ENCODE measurements at regions of chr12 and their contacts with region 1.

Region 1: DNA sequence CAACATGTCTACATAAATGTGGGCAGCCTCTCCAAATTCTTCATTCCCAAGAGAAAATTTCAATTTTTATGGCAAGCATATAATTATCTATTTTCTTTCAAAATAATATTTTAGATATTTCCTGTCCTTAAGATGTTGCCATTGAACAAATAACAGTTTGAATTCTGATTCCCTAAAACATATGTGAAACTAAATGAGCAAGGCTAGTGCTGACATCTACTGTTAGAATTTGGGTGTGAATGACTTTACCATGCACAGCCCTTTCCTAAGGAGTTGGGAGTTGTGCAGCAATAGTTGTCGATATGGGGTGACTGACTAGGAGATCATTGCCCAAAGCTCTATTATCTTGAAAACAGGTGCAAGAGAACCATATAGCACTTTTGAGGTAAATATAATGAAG is 108.2 kb upstream of the SLC38A4 start:
- DNase-seq: no peak
- ATAC-seq: peak; percentile 70
- H3K4me3 ChIP-seq: no peak overlapping the region
- H3K27ac ChIP-seq: no peak overlapping the region
- H3K4me1 ChIP-seq: no peaks in the 10 kb centered on the region
- H3K27me3 ChIP-seq: no peaks in the 10 kb centered on the region
- CTCF ChIP-seq: peak; percentile 23 to 56 (median 51); a peak in 5 of 6 replicates
- EP300 ChIP-seq: no peak
- POLR2A ChIP-seq: no peak
- RAD21 ChIP-seq: peak; percentile 84

Region 2: DNA sequence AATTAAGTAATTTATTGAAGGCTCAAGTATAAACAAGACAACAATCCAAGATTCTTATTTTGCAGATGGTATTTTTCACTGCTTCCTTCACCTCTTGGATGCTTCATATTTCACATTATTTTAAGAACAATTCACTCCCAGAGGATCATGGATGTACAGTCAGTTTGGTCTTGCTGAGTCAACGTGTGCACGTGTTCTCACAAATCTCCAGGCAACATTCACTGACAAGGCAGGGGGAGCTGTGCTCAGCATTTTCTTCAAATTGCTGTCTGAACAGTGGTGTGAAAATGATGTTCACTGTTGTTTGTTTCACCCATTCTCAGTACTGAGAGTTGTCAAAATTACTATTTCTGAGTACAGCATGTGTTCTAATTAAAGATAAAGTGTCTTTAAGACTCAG is 10.1 kb after region 1 on chr12:
- CTCF ChIA-PET with region 1: no interaction called
- POLR2A ChIA-PET with region 1: no interaction called
- RAD21 ChIA-PET with region 1: no interaction called
- SMC1A ChIA-PET with region 1: interaction called, 11 read pairs
- in situ Hi-C with region 1: no loop called
- intact Hi-C with region 1: no loop called
- DNase-seq: no peak
- ATAC-seq: no peak
- H3K4me3 ChIP-seq: no peak overlapping the region
- H3K27ac ChIP-seq: no peak overlapping the region
- H3K4me1 ChIP-seq: no peaks in the 10 kb centered on the region
- H3K27me3 ChIP-seq: no peaks in the 10 kb centered on the region
- CTCF ChIP-seq: 0 out of 6 replicates have a peak, but pooled peaks of 1 of the 3 experiments have one; percentile 9
- EP300 ChIP-seq: no peak
- POLR2A ChIP-seq: no peak
- RAD21 ChIP-seq: no peak

Measured in GM12878 (cell line).